HEK293 (cell line): ENCODE measurements at regions of chr14 and their contacts with region 1.

Region 1: DNA sequence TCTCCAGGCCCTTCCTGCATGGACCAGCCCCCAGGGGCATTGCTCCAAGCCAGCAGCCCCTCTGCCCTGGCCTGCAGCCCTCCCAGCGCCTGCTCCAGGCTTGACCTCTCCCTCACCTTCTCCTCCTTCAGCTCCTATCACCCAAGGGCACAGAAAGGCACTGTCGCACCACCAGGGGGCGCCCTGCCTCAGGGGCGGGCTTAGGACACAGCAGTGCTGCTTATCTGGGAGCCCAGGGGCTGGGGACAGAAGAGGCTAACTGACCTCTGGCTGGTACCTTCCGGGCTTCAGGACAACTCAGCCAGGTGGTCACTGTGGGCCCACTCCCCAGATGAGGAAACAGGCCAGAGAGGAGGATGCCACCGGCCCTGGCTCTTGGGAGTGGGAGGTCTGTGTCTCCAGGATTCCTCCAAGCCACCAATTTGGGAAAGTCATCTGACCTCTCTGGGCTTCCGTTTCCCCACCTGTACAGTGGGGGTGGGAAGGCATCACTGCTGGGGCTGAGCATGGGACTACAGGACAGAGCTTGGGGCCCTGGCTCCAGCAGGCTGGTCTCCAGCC is 25.3 kb upstream of the GPR132 start:
- H3K4me3 ChIP-seq: no peak overlapping the region
- H3K27ac ChIP-seq: no peak overlapping the region
- H3K4me1 ChIP-seq: peaks cover 8% of the 10 kb centered on the region
- CTCF ChIP-seq: peak; percentile 91

Region 2: GRCh38 chr14:104473649-104474494 is 616.7 kb before region 1 on chr14:
- CTCF ChIA-PET with region 1: no interaction called
- POLR2A ChIA-PET with region 1: no interaction called
- H3K4me3 ChIP-seq: no peak overlapping the region
- H3K27ac ChIP-seq: no peak overlapping the region
- H3K4me1 ChIP-seq: no peaks in the 10 kb centered on the region
- CTCF ChIP-seq: no peak

Region 3: GRCh38 chr14:104715422-104715821 is 375.2 kb before region 1 on chr14:
- CTCF ChIA-PET with region 1: no interaction called
- POLR2A ChIA-PET with region 1: no interaction called
- H3K4me3 ChIP-seq: no peak overlapping the region
- H3K27ac ChIP-seq: no peak overlapping the region
- H3K4me1 ChIP-seq: no peaks in the 10 kb centered on the region
- CTCF ChIP-seq: no peak

Region 4: DNA sequence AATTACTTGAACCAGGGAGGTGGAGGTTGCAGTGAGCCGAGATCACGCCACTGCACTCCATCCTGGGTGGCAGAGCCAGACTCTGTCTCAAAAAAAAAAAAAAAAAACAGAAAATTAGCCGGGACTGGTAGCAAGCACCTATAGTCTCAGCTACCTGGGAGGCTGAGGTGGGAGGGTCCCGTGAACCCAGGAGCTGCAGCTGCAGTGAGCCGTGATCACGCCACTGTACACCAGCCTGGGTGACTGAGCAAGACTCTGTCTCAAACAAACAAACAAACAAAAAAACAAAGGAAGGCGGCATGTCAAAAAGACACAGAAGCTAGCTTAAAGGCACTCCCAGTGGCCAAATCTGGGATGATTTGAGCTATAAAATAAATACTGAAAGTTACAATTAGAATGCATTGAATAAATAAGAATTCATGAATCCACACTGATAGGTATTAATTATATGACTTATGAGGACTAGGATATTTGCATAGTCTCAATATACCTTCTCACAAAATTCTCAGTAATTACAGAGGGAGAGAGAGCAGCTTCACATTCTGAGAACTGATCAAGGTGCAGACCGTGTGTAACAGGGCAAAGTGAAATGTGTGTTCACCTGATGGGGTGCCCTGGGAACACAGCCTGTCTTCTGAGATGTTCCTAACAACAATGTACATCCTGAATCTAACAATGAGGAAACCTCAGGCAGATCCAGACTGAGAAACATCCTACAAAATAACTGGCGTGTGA is 17.4 kb after region 1 on chr14:
- CTCF ChIA-PET with region 1: interaction called, 10 read pairs
- POLR2A ChIA-PET with region 1: no interaction called
- H3K4me3 ChIP-seq: no peak overlapping the region
- H3K27ac ChIP-seq: no peak overlapping the region
- H3K4me1 ChIP-seq: peaks cover 4% of the 10 kb centered on the region; the same call in 1 of the 2 replicates
- CTCF ChIP-seq: no peak